Vagina (tissue), 2 donors: ENCODE measurements at regions of chr20 and their contacts with region 1.

Region 1: GRCh38 chr20:5788385-5788895 is 38.2 kb downstream of the SHLD1 start:
- DNase-seq: no peak
- H3K4me3 ChIP-seq: no peak overlapping the region
- H3K27ac ChIP-seq: no peak overlapping the region
- H3K4me1 ChIP-seq: peaks cover 6% of the 10 kb centered on the region
- H3K27me3 ChIP-seq: no peaks in the 10 kb centered on the region
- CTCF ChIP-seq: peak; percentile 71 to 92 (median 87)
- POLR2A ChIP-seq: no peak

Region 2: DNA sequence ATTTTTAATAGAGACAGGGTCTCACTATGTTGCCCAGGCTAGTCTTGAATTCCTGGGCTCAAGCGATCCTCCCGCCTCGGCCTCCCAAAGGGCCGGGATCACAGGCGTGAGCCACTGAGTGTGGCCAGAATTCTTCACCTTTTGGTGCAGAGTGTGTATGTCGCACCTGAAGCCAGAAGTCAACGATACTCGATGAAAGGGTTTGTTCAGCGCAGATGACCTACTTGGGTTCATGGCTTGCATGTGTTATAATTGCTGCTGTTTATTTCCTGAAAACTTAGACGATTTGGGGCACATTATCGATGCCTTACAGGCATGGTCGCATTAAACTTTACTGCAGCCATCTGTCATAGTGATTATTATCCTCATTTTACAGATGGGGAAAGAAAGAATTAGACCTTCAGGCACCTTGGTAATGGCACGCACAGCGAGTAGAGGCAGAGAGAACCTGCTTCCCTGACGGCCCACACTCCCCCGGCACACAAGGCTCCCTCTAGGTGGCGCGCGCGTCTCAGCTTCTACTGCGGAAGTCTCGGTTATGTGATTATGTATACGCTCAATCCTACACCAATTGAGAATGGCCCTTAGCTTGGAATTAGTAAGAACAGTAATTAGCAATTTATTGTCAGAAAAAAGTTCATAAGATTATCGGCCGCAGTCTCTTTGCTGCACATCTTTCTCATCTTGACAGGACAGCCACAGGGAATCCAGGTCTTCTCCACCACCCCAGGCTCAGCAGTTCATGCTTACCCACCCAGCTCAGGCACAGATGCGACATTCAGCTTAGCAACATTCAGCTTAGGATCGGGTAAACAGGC is 258.9 kb before region 1 on chr20:
- intact Hi-C with region 1: loop called (anchors 2 kb)
- DNase-seq: no peak
- H3K4me3 ChIP-seq: no peak overlapping the region
- H3K27ac ChIP-seq: no peak overlapping the region
- H3K4me1 ChIP-seq: peaks cover 11% of the 10 kb centered on the region
- H3K27me3 ChIP-seq: no peaks in the 10 kb centered on the region
- CTCF ChIP-seq: peak in 2 of 3 experiments; percentile 31 to 81
- POLR2A ChIP-seq: no peak

Region 3: GRCh38 chr20:5570452-5570851 is 218.0 kb before region 1 on chr20:
- intact Hi-C with region 1: loop called (anchors 10 kb)
- DNase-seq: no peak
- H3K4me3 ChIP-seq: no peak overlapping the region
- H3K27ac ChIP-seq: no peak overlapping the region
- H3K4me1 ChIP-seq: no peaks in the 10 kb centered on the region
- H3K27me3 ChIP-seq: no peaks in the 10 kb centered on the region
- CTCF ChIP-seq: no peak
- POLR2A ChIP-seq: no peak

Region 4: GRCh38 chr20:6347916-6348315 is 559.5 kb after region 1 on chr20:
- intact Hi-C with region 1: no loop called
- DNase-seq: no peak
- H3K4me3 ChIP-seq: no peak overlapping the region
- H3K27ac ChIP-seq: no peak overlapping the region
- H3K4me1 ChIP-seq: no peaks in the 10 kb centered on the region
- H3K27me3 ChIP-seq: no peaks in the 10 kb centered on the region
- CTCF ChIP-seq: no peak
- POLR2A ChIP-seq: no peak